Gastrocnemius medialis (tissue), 4 donors: ENCODE measurements at regions of chr22 and their contacts with region 1.

Region 1: GRCh38 chr22:16717699-16718558 is 107.3 kb downstream of the XKR3 start:
- DNase-seq: no peak
- ATAC-seq: no peak
- H3K4me3 ChIP-seq: no peak overlapping the region
- H3K27ac ChIP-seq: no peak overlapping the region
- H3K4me1 ChIP-seq: no peaks in the 10 kb centered on the region
- H3K27me3 ChIP-seq: peaks cover 0 to 8% (median 7%) of the 10 kb centered on the region in 3 donors
- CTCF ChIP-seq: no peak
- POLR2A ChIP-seq: no peak

Region 2: DNA sequence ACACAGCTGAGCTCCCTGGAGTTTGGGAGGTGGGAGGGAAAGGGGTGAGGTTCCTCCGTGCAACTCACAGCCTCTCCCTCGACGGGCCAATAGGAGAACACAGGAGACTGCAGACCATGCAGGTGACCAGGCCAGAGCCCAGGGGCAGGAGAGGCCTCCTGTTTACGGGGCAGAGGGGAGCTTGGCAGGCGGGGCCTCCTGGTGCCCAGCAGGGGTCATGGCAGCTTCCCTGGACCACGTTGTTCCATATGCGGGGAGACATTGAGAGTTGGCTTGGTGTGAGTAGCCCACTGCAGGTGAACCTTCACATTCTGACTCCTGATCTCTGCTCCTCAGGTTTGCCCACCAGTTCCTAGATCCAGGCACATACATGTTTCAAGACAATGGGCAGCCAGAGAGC is 126.6 kb after region 1 on chr22:
- in situ Hi-C with region 1: no loop called
- intact Hi-C with region 1: loop called (anchors 10 kb)
- DNase-seq: no peak
- ATAC-seq: no peak
- H3K4me3 ChIP-seq: no peak overlapping the region
- H3K27ac ChIP-seq: no peak overlapping the region
- H3K4me1 ChIP-seq: no peaks in the 10 kb centered on the region
- H3K27me3 ChIP-seq: no peaks in the 10 kb centered on the region
- CTCF ChIP-seq: no peak
- POLR2A ChIP-seq: no peak